Endothelial cell of umbilical vein (primary cell): ENCODE measurements at regions of chr6 and their contacts with region 1.

Region 1: GRCh38 chr6:31769684-31770371 is 7.3 kb downstream of the VWA7 start:
- DNase-seq: peak; percentile 66
- H3K4me3 ChIP-seq: no peak overlapping the region
- H3K27ac ChIP-seq: no peak overlapping the region
- H3K4me1 ChIP-seq: no peaks in the 10 kb centered on the region
- H3K27me3 ChIP-seq: no peaks in the 10 kb centered on the region
- CTCF ChIP-seq: peak; percentile 83 to 88
- POLR2A ChIP-seq: no peak

Region 2: GRCh38 chr6:31712296-31712695 is 57.5 kb before region 1 on chr6:
- CTCF ChIA-PET with region 1: interaction called, 14 read pairs
- POLR2A ChIA-PET with region 1: interaction called, 7 read pairs
- dilution Hi-C with region 1: no loop called
- intact Hi-C with region 1: no loop called
- DNase-seq: no peak
- H3K4me3 ChIP-seq: no peak overlapping the region
- H3K27ac ChIP-seq: no peak overlapping the region
- H3K4me1 ChIP-seq: peaks cover 8% of the 10 kb centered on the region
- H3K27me3 ChIP-seq: no peaks in the 10 kb centered on the region
- CTCF ChIP-seq: peak in 1 of 2 donors; percentile 35
- POLR2A ChIP-seq: no peak

Region 3: DNA sequence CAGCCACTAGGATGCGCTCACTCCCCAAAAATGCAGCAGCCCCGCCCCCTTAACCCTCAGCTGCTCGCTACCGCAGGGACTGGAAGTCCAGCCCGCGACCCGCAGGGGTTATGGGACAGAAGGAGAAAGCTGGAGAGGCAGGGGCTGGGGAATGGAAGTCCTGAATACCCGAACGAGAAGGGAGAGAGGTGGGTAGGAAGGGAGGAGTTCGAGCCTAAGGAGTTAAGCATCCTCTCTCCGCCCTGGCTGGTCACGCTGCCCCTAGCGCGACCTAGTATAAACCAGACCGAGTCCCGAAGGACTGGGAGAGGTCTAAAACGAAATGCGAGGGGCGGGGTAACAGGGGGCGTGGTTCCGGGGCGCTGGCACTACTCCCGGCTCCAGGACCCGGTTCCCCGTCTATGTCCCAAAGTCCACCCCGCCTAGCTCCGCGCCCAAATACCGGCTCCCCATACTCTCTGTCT is 40.3 kb before region 1 on chr6:
- CTCF ChIA-PET with region 1: interaction called, 42 read pairs
- POLR2A ChIA-PET with region 1: interaction called, 4 read pairs
- dilution Hi-C with region 1: no loop called
- intact Hi-C with region 1: loop called (anchors 1 kb)
- DNase-seq: peak; percentile 90
- H3K4me3 ChIP-seq: peak overlapping the region; percentile 66 to 94 (median 70)
- H3K27ac ChIP-seq: peak overlapping the region; percentile 54
- H3K4me1 ChIP-seq: peaks cover 37% of the 10 kb centered on the region
- H3K27me3 ChIP-seq: no peaks in the 10 kb centered on the region
- CTCF ChIP-seq: peak in 1 of 2 donors; percentile 73
- POLR2A ChIP-seq: no peak

Region 4: GRCh38 chr6:31752739-31753319 is 17.0 kb before region 1 on chr6:
- CTCF ChIA-PET with region 1: interaction called, 18 read pairs
- POLR2A ChIA-PET with region 1: no interaction called
- dilution Hi-C with region 1: no loop called
- intact Hi-C with region 1: no loop called
- DNase-seq: no peak
- H3K4me3 ChIP-seq: no peak overlapping the region
- H3K27ac ChIP-seq: no peak overlapping the region
- H3K4me1 ChIP-seq: no peaks in the 10 kb centered on the region
- H3K27me3 ChIP-seq: no peaks in the 10 kb centered on the region
- CTCF ChIP-seq: no peak
- POLR2A ChIP-seq: peak; percentile 18

Region 5: DNA sequence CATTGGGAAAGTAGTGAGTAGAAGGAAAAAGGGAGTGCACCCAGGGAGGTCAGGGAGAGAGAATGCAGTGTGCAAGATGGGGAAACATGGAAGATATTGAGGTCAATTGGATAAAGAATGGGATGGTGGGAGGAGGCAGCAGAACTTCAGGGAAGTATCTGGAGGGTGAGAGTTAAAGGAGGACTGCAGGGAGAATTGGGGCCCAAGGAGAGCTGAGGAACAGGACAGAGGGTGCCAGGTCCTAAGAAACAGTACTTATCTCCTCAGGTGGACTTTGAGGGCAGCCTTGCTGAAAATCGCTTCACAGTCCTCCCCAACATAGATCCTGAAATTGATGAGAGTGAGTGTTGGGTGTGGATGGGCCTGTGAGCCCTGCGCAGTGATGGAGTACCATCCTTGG is 11.5 kb before region 1 on chr6:
- CTCF ChIA-PET with region 1: interaction called, 18 read pairs
- POLR2A ChIA-PET with region 1: no interaction called
- dilution Hi-C with region 1: no loop called
- intact Hi-C with region 1: no loop called
- DNase-seq: no peak
- H3K4me3 ChIP-seq: no peak overlapping the region
- H3K27ac ChIP-seq: no peak overlapping the region
- H3K4me1 ChIP-seq: no peaks in the 10 kb centered on the region
- H3K27me3 ChIP-seq: no peaks in the 10 kb centered on the region
- CTCF ChIP-seq: no peak
- POLR2A ChIP-seq: no peak

Region 6: DNA sequence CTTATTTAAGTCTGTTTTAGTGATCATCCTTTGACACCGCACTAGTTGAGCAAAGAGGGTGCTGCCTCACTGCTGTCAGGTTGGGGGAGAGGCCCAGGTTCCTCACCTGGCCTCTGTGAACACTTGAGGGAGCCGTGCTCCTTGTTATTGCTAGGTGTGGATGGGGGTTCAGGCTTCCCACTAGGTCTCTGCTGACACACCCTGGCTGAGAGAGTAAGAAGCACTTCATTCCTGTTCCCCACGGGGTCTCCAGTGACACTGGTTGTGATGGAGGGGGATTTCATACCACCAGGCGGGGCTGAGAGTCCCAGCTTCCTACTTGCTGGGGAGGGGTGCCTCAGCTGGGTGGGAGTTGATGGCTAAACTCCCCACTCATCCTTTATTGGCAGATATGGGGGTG is 465.1 kb after region 1 on chr6:
- CTCF ChIA-PET with region 1: no interaction called
- POLR2A ChIA-PET with region 1: no interaction called
- dilution Hi-C with region 1: no loop called
- intact Hi-C with region 1: no loop called
- DNase-seq: peak; percentile 23
- H3K4me3 ChIP-seq: no peak overlapping the region
- H3K27ac ChIP-seq: peak overlapping the region; percentile 58
- H3K4me1 ChIP-seq: peaks cover 11% of the 10 kb centered on the region
- H3K27me3 ChIP-seq: no peaks in the 10 kb centered on the region
- CTCF ChIP-seq: no peak
- POLR2A ChIP-seq: no peak